Activated T-helper 2 cell treated with anti-CD3 and anti-CD28 coated beads, Interferon-gamma antibody, Interleukin-2, Interleukin-4, amounts not matched to agents 10 μg/mL and 5 μg/mL and 100 μg/mL, durations not matched to agents 14 hours and 24 hours and 36 hours (primary cell): ENCODE measurements at regions of chr16 and their contacts with region 1.

Region 1: DNA sequence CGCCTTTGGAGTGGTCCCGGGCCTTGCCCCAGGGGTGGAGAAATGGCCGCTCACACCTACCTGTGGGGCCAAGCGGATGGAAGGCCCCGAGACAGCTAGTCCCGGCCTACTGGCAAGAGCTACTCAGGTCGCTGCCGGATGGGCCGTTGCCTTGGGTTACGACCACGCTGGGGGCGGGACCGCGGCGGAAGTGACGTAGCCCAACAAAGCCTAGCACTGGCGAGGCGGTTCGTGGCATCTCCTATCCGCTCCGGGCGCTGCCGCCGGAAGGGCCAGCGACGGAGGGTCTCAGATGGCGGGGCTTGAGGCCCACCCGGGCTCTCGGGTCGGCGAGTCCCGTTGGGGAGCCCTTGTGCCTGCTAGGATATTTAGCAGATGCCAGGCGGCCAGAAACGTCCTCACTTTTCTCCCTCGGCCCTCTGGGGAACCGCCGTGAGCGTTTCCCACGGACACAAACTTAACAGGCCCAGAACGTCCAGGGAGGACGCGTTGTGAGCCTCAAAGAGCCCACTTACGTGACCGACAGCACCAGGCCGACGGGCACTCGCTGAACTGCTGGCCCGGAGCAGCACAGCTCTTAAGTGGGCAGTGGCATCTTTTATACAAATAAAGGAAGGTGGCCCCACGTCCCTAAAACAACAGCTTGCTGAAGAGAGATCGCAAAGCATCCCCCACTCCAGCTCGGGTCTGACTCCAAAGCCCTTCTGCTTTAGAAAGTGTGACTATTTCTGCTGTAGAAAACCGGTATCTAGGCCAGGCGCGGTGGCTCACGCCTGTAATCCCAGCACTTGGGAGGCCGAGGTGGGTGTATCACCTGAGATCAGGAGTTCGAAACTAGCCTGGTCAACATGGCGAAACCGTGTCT is at the start of gene C16orf46:
- DNase-seq: peak; percentile 96
- H3K4me3 Mint-ChIP-seq: peak within 1 kb of the TSS; percentile 22
- H3K27ac Mint-ChIP-seq: no peak within 1 kb of the TSS
- H3K4me1 Mint-ChIP-seq: peaks cover 3% of the 10 kb centered on the region
- H3K27me3 Mint-ChIP-seq: peaks cover 6% of the 10 kb centered on the region
- total RNA-seq, gene C16orf46: 0.11 and 0.32 TPM in 2 replicates

Region 2: GRCh38 chr16:81035398-81035974 is 41.8 kb before region 1 on chr16 and contains the start of gene ATMIN:
- intact Hi-C with region 1: loop called (anchors 1 kb)
- DNase-seq: peak; percentile 80
- H3K4me3 Mint-ChIP-seq: peak within 1 kb of the TSS; percentile 82
- H3K27ac Mint-ChIP-seq: peak within 1 kb of the TSS; percentile 43
- H3K4me1 Mint-ChIP-seq: peaks cover 18% of the 10 kb centered on the region
- H3K27me3 Mint-ChIP-seq: no peaks in the 10 kb centered on the region
- total RNA-seq, gene ATMIN: 25.8 and 27.1 TPM in 2 replicates

Region 3: DNA sequence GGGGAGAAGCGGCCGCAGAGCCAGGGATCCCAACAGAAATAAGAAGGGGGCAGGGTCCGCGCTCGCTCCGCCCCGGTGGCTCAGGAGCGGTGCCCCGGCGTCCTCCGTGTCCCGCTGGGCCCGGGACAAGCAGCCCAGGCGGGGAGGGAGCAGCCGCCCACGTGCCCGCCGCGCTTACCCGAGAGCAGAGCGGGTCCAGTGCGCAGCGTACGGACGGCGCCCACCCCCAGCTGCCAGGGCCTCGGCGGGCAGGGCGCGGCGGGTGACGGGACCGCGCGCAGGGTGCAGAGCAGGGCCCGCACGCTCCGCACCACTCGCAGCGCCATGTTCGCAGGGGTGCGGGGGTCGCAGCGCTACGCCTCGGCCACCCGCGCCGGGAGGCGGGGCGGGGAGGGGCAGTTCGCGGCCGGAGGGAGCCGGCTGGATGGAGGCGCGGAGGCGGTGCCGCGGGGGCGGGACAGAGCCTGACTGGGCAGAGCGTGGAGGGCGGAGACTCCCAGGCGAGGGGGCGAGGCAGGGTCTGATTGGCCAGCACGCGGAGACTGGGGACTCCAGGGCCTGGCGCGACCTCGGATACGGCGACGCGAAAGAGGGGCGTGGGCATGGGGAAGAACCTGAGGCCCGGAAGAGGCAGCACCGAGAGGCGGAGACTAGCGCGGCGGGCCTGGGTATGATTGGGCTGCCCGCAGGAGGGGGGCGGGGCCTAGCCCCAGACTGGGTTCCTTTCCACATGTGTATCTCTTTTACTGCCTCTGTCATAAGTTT is 18.8 kb after region 1 on chr16 and contains the start of gene GCSH:
- intact Hi-C with region 1: loop called (anchors 1 kb)
- DNase-seq: peak; percentile 99
- H3K4me3 Mint-ChIP-seq: peak within 1 kb of the TSS; percentile 77
- H3K27ac Mint-ChIP-seq: peak within 1 kb of the TSS; percentile 61
- H3K4me1 Mint-ChIP-seq: peaks cover 8% of the 10 kb centered on the region
- H3K27me3 Mint-ChIP-seq: no peaks in the 10 kb centered on the region
- total RNA-seq, gene GCSH: 23.2 and 25.7 TPM in 2 replicates

Region 4: DNA sequence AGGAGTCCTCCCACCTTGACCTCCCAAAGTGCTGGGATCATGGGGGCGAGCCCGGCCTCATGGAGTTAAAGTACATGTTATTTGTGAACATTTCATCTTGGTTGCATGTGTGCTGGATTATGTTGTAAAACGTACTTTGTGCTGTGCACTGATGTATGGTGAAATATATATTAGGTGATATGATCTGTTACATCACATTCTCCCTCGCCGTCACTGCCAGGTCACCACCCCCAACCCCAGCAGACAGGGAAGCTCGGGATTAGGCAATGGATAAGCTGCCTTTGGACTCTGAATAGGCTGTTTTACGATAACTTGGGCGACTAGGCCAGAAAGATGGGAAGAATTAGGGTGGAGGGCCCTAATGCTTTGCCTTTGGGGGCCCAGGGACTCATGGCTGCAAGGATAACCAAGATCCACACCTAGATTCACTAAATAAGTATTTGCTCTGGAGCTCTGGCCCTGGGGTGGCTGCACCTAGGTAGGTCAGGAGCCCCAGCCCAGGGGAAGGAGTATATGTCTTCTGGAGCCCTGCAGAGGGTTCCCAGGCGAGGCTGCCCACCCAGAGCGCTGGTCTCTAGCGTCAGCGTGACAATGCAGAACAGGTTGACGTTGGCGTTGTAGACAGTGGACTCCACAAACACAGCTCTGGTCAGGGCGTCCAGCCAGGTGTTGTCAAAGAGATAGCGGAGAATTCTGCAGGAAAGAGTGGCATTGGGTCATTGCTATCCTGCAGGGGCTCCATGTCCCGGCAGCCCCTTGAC is 46.0 kb after region 1 on chr16:
- intact Hi-C with region 1: no loop called
- DNase-seq: no peak
- H3K4me3 Mint-ChIP-seq: no peak overlapping the region
- H3K27ac Mint-ChIP-seq: no peak overlapping the region
- H3K4me1 Mint-ChIP-seq: no peaks in the 10 kb centered on the region
- H3K27me3 Mint-ChIP-seq: peaks cover 2% of the 10 kb centered on the region